ENCODE measurements at regions of chr11 and their contacts with region 1.

Region 1: GRCh38 chr11:119356349-119357031 is 10.0 kb upstream of the MFRP start:
- DNase-seq: no peak
- H3K4me3 ChIP-seq: peak overlapping the region; percentile 25 to 48 (median 32)
- H3K27ac ChIP-seq: no peak overlapping the region
- H3K4me1 ChIP-seq: peaks cover 29% of the 10 kb centered on the region
- H3K27me3 ChIP-seq: no peaks in the 10 kb centered on the region
- CTCF ChIP-seq: peak; percentile 58 to 92

Region 2: GRCh38 chr11:119095066-119095880 is 261.2 kb before region 1 on chr11:
- CTCF ChIA-PET with region 1: no interaction called
- dilution Hi-C with region 1: no loop called
- in situ Hi-C with region 1: no loop called
- intact Hi-C with region 1: no loop called
- DNase-seq: peak; percentile 99
- H3K4me3 ChIP-seq: peak overlapping the region; percentile 66 to 87 (median 68)
- H3K27ac ChIP-seq: peak overlapping the region; percentile 64
- H3K4me1 ChIP-seq: peaks cover 24% of the 10 kb centered on the region
- H3K27me3 ChIP-seq: no peaks in the 10 kb centered on the region
- CTCF ChIP-seq: no peak

Region 3: GRCh38 chr11:119284344-119285157 is 71.9 kb before region 1 on chr11:
- CTCF ChIA-PET with region 1: no interaction called
- dilution Hi-C with region 1: loop called (anchors 5 kb)
- in situ Hi-C with region 1: no loop called
- intact Hi-C with region 1: no loop called
- DNase-seq: peak; percentile 35
- H3K4me3 ChIP-seq: no peak overlapping the region
- H3K27ac ChIP-seq: no peak overlapping the region
- H3K4me1 ChIP-seq: no peaks in the 10 kb centered on the region
- H3K27me3 ChIP-seq: no peaks in the 10 kb centered on the region
- CTCF ChIP-seq: peak in 1 of 2 donors; percentile 59

Region 4: GRCh38 chr11:119373921-119374631 is 17.6 kb after region 1 on chr11:
- CTCF ChIA-PET with region 1: interaction called, 9 read pairs
- dilution Hi-C with region 1: no loop called
- in situ Hi-C with region 1: no loop called
- intact Hi-C with region 1: loop called (anchors 1 kb)
- DNase-seq: peak; percentile 54
- H3K4me3 ChIP-seq: no peak overlapping the region
- H3K27ac ChIP-seq: no peak overlapping the region
- H3K4me1 ChIP-seq: peaks cover 42% of the 10 kb centered on the region
- H3K27me3 ChIP-seq: no peaks in the 10 kb centered on the region
- CTCF ChIP-seq: peak; percentile 94 to 96

Region 5: GRCh38 chr11:119403021-119403420 is 46.5 kb after region 1 on chr11:
- CTCF ChIA-PET with region 1: no interaction called
- dilution Hi-C with region 1: loop called (anchors 5 kb)
- in situ Hi-C with region 1: no loop called
- intact Hi-C with region 1: no loop called
- DNase-seq: no peak
- H3K4me3 ChIP-seq: no peak overlapping the region
- H3K27ac ChIP-seq: no peak overlapping the region
- H3K4me1 ChIP-seq: no peaks in the 10 kb centered on the region
- H3K27me3 ChIP-seq: no peaks in the 10 kb centered on the region
- CTCF ChIP-seq: no peak

Region 6: GRCh38 chr11:119540370-119541125 is 184.1 kb after region 1 on chr11:
- CTCF ChIA-PET with region 1: no interaction called
- dilution Hi-C with region 1: no loop called
- in situ Hi-C with region 1: no loop called
- intact Hi-C with region 1: no loop called
- DNase-seq: no peak
- H3K4me3 ChIP-seq: no peak overlapping the region
- H3K27ac ChIP-seq: no peak overlapping the region
- H3K4me1 ChIP-seq: no peaks in the 10 kb centered on the region
- H3K27me3 ChIP-seq: no peaks in the 10 kb centered on the region
- CTCF ChIP-seq: no peak